ENCODE measurements at regions of chr17 and their contacts with region 1.

Region 1: GRCh38 chr17:2685696-2686095 is 25.9 kb downstream of the CLUH start:
- DNase-seq: no peak
- H3K4me3 ChIP-seq: no peak overlapping the region
- CTCF ChIP-seq: no peak

Region 2: DNA sequence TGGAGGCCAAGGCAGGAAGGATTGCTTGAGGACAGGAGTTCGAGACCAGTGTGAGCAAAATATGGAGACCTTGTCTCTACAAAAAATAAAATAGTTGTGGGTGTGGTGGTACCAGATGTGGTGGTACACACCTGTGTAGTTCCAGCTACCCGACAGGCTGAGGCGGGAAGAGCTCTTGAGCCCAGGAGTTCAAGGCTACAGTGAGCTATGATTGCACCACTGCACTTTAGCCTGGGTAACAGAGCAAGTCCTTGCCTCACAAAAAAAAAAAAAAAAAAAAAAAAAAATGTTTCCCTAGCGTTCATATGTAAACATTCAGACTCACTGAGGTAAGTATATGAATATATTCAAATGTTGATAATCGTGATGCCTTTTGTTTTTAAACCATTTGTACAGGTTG is 13.7 kb before region 1 on chr17:
- CTCF ChIA-PET with region 1: interaction called, 18 read pairs
- POLR2A ChIA-PET with region 1: interaction called, 3 read pairs
- DNase-seq: no peak
- H3K4me3 ChIP-seq: no peak overlapping the region
- CTCF ChIP-seq: no peak